Lower lobe of right lung (tissue), 2 donors: ENCODE measurements at regions of chr7 and their contacts with region 1.

Region 1: GRCh38 chr7:121107923-121108498 is 119.5 kb downstream of the CPED1 start:
- DNase-seq: no peak
- ATAC-seq: peak; percentile 76 to 84
- H3K4me3 ChIP-seq: no peak overlapping the region
- H3K27ac ChIP-seq: no peak overlapping the region
- H3K4me1 ChIP-seq: no peaks in the 10 kb centered on the region
- H3K27me3 ChIP-seq: no peaks in the 10 kb centered on the region
- CTCF ChIP-seq: peak; percentile 83

Region 2: DNA sequence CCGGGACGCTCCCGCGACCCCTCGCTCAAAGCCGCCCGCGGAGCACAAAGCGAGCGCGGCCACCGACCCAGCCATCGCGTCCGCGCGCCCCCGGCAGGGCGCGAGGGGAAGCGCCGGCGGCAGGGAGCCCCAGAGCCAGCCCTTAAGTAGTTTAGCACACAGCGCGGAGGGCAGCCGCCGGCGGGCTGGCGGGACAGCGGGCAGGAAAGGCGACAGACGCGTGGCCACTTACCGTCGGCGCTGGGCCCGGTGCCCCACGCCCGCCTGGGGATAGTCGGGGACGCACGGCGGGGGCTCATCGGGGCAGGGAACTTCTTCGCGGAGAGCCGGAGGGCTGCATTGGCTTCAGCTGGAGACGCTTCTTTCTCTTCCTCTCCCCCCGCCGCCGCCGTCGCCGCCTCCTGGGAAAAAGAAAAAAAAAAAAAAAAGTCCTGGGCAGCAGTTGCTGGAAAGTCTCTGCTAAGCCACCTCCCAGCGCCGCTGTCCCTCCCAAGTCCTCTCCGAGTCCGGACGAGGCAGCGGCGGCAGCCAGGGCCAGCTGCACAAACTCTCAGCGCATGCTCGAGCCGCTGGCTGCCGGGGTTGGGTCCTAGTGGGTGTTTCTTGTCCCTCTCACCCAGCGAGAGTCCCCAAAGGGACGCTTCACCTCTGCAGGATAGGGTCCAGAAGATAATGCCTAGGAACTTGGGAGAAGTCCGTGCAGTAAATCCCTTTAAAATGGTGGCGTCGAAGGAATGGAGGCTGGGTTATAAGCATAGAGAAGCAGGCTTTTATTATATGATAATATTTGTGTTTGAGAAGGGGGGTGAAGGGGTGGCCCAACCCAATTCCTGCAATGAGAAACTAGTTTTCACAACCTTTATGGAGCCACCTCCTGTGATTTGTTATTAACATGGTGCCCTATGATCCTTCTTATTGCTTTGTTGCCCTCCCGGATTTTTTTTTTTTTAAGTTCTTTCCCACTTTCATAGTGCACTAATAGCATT is 250.1 kb before region 1 on chr7 and contains the start of gene TSPAN12:
- intact Hi-C with region 1: no loop called
- DNase-seq: peak; percentile 90
- ATAC-seq: peak; percentile 97
- H3K4me3 ChIP-seq: peak within 1 kb of the TSS; percentile 70
- H3K27ac ChIP-seq: peak within 1 kb of the TSS; percentile 87
- H3K4me1 ChIP-seq: peaks cover 18% of the 10 kb centered on the region
- H3K27me3 ChIP-seq: no peaks in the 10 kb centered on the region
- CTCF ChIP-seq: peak; percentile 81
- total RNA-seq, gene TSPAN12: 43.6 TPM

Region 3: DNA sequence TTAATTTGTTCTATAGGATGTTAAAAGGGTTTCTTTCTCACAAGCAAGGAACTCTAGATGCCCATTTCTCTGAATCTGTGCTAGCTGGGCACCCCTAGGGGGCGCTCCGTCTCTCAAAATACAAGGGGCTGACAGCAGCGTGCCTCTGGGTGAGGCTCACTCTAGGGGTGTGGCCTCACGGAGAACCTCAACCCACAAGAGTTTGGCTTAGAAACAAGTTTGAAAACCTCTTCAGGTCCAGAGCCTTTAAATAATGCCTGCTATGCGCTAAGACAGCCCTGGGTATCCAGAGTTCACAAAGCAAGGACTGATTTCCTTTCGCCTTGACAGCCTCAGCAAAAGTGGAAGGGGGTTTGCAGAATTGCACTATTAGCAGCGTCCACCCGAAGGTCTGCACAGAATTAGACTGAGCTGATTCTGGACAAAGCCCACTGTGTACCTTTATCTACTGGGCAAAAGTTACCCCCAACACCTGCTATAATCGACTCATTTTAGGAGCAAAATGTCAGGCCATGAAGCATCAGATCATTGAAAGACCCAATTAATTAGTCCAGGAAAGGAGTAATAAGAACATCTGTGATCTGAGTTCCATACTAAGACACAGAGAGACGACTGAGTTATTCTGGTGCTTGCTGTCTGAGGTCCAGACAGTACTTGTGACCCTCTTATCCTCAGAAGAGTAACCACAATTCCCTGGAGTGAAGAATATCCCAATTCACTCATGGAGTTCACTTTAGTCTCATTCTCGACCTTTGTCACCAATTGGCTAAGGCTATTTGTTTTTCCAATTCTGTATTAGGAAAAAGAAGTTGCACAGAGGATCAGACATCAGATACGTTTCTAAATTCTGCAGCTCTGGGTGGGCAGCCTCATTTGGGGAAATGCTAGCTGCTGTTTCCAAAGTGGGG is 120.1 kb before region 1 on chr7:
- intact Hi-C with region 1: loop called (anchors 10 kb)
- DNase-seq: peak; percentile 92
- ATAC-seq: peak; percentile 97 to 98
- H3K4me3 ChIP-seq: peak overlapping the region; percentile 47
- H3K27ac ChIP-seq: peak overlapping the region; percentile 75
- H3K4me1 ChIP-seq: peaks cover 29% of the 10 kb centered on the region
- H3K27me3 ChIP-seq: no peaks in the 10 kb centered on the region
- CTCF ChIP-seq: peak; percentile 97